ENCODE measurements at regions of chr16 and their contacts with region 1.

Region 1: GRCh38 chr16:85610508-85611332 is 2.4 kb upstream of the GSE1 start:
- DNase-seq: peak; percentile 68 to 93 (median 80)
- ATAC-seq: peak; percentile 85
- H3K4me3 ChIP-seq: peak overlapping the region; percentile 66
- H3K4me3 Mint-ChIP-seq: peak overlapping the region; percentile 73 to 86 (median 81)
- H3K27ac ChIP-seq: no peak overlapping the region
- H3K27ac Mint-ChIP-seq: peak overlapping the region in 5 of 9 donors; percentile 17 to 76 (median 76)
- H3K4me1 ChIP-seq: peaks cover 23 to 31% of the 10 kb centered on the region in 2 donors
- H3K4me1 Mint-ChIP-seq: peaks cover 16 to 55% (median 27%) of the 10 kb centered on the region in 7 donors
- H3K27me3 ChIP-seq: peaks cover 0 to 2% of the 10 kb centered on the region in 2 donors
- H3K27me3 Mint-ChIP-seq: peaks cover 0 to 14% (median 0%) of the 10 kb centered on the region in 5 donors

Region 2: GRCh38 chr16:85393674-85394483 is 216.8 kb before region 1 on chr16:
- CTCF ChIA-PET with region 1: interaction called, 5 read pairs
- POLR2A ChIA-PET with region 1: no interaction called
- intact Hi-C with region 1: loop called (anchors 1 kb)
- DNase-seq: peak; percentile 26 to 73 (median 51)
- ATAC-seq: peak; percentile 82
- H3K4me3 ChIP-seq: no peak overlapping the region
- H3K4me3 Mint-ChIP-seq: no peak overlapping the region
- H3K27ac ChIP-seq: no peak overlapping the region
- H3K27ac Mint-ChIP-seq: no peak overlapping the region
- H3K4me1 ChIP-seq: no peaks in the 10 kb centered on the region
- H3K4me1 Mint-ChIP-seq: peaks cover 0 to 2% (median 0%) of the 10 kb centered on the region in 7 donors
- H3K27me3 ChIP-seq: no peaks in the 10 kb centered on the region
- H3K27me3 Mint-ChIP-seq: peaks cover 0 to 3% (median 0%) of the 10 kb centered on the region in 5 donors

Region 3: DNA sequence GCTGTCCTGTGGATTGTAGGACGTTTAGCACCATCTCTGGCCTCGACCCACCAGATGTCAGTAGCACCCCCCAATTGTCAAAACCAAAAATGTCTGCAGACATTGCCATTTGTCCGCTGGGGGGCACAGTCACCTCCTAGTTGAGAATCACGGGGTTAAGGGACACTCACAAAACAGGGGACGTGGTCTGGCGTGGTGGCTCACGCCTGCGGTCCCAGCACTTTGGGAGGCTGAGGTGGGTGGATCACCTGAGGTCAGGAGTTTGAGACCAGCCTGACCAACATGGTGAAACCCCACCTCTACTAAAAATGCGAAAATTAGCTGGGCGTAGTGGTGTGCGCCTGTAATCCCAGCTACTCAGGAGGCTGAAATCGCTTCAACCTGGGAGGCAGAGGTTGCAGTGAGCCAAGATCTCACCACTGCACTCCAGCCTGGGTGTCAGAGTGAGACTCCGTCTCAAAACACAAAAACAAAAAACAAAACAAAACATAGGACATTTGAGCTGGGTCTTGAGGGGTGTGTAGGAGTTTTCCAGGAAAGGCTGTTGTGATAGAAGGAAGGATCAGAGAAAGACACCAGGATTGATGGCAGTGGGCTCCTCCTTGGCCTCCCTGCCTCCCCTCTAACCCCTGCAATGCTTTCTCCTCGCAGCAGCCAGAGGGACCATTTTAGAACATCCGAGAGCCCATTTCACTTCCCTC is 169.4 kb before region 1 on chr16:
- CTCF ChIA-PET with region 1: interaction called, 10 read pairs
- POLR2A ChIA-PET with region 1: no interaction called
- intact Hi-C with region 1: no loop called
- DNase-seq: no peak
- ATAC-seq: no peak
- H3K4me3 ChIP-seq: no peak overlapping the region
- H3K4me3 Mint-ChIP-seq: no peak overlapping the region
- H3K27ac ChIP-seq: no peak overlapping the region
- H3K27ac Mint-ChIP-seq: peak overlapping the region in 1 of 9 donors; percentile 41
- H3K4me1 ChIP-seq: no peaks in the 10 kb centered on the region
- H3K4me1 Mint-ChIP-seq: peaks cover 0 to 13% (median 10%) of the 10 kb centered on the region in 7 donors
- H3K27me3 ChIP-seq: no peaks in the 10 kb centered on the region
- H3K27me3 Mint-ChIP-seq: no peaks in the 10 kb centered on the region

Region 4: GRCh38 chr16:85688586-85689284 is 78.0 kb after region 1 on chr16 and contains the start of gene GINS2:
- CTCF ChIA-PET with region 1: no interaction called
- POLR2A ChIA-PET with region 1: no interaction called
- intact Hi-C with region 1: loop called (anchors 2 to 5 kb)
- DNase-seq: peak; percentile 77 to 90 (median 89)
- ATAC-seq: peak; percentile 100
- H3K4me3 ChIP-seq: peak within 1 kb of the TSS; percentile 69
- H3K4me3 Mint-ChIP-seq: peak within 1 kb of the TSS; percentile 64 to 85 (median 76)
- H3K27ac ChIP-seq: peak within 1 kb of the TSS; percentile 51
- H3K27ac Mint-ChIP-seq: peak within 1 kb of the TSS in 3 of 9 donors; percentile 46 to 63 (median 56)
- H3K4me1 ChIP-seq: peaks cover 5% of the 10 kb centered on the region in 2 donors
- H3K4me1 Mint-ChIP-seq: peaks cover under 1 to 21% (median 7%) of the 10 kb centered on the region in 7 donors
- H3K27me3 ChIP-seq: no peaks in the 10 kb centered on the region
- H3K27me3 Mint-ChIP-seq: peaks cover 0 to 8% (median 6%) of the 10 kb centered on the region in 5 donors
- total RNA-seq, gene GINS2: 1.0 to 43.6 (median 1.9) TPM

Measured in naive thymus-derived CD4-positive, alpha-beta T cell (primary cell).